Activated CD8-positive, alpha-beta T cell treated with anti-CD3 and anti-CD28 coated beads for 36 hours (primary cell): ENCODE measurements at regions of chr2 and their contacts with region 1.

Region 1: DNA sequence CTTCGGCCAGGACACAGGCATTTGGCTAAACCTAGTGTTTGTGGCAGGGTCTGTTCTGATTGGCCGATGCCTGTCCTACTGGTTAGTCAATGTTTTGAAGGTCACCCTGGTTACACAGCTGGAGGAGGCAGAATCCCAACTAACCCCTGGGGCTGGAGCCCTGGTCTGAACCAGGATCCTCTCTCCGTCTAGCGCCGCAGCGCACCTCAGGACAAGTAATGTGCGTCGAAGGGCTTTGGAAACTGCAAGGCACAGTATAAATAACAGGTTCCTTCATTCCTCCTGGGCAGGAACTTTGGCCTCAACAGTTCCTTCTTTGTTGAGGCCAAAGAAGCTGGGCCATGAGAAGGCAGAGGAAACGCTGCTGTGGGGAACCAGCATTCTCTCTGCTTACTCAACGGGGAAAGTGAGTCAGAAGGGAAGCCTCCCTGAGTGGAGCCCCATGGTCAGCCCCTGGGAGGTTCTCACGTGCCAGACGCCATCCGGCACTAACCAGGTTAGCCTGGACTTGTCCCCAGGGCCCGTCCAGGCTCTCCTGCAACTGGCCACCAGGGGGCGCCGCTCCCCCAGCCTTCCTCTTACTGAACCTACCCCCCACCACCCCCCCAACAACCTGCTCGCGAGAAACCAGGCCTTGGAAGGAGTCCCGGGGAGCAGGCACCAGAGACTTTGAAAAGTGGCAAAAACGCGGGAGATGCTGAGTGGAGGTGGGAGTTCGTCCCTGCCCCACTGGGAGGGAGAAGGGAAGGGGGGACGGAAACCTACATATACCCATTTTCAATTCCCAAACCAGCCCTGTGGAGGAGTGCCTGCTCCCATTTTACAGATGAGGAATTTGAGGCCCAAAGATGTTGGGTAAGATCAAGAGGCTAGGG is 19.8 kb downstream of the TEX44 start:
- DNase-seq: peak; percentile 99
- ATAC-seq: peak; percentile 55
- H3K4me3 Mint-ChIP-seq: peak overlapping the region; percentile 87
- H3K27ac Mint-ChIP-seq: peak overlapping the region; percentile 97
- H3K4me1 Mint-ChIP-seq: peaks cover 46% of the 10 kb centered on the region
- H3K27me3 Mint-ChIP-seq: no peaks in the 10 kb centered on the region
- CTCF ChIP-seq: peak; percentile 71

Region 2: GRCh38 chr2:231452799-231453508 is 159.5 kb before region 1 on chr2:
- CTCF ChIA-PET with region 1: interaction called, 3 read pairs
- POLR2A ChIA-PET with region 1: interaction called, 11 read pairs
- intact Hi-C with region 1: no loop called
- DNase-seq: peak; percentile 24
- ATAC-seq: peak; percentile 9
- H3K4me3 Mint-ChIP-seq: peak overlapping the region; percentile 8
- H3K27ac Mint-ChIP-seq: peak overlapping the region; percentile 57
- H3K4me1 Mint-ChIP-seq: peaks cover 24% of the 10 kb centered on the region
- H3K27me3 Mint-ChIP-seq: no peaks in the 10 kb centered on the region
- CTCF ChIP-seq: no peak

Region 3: DNA sequence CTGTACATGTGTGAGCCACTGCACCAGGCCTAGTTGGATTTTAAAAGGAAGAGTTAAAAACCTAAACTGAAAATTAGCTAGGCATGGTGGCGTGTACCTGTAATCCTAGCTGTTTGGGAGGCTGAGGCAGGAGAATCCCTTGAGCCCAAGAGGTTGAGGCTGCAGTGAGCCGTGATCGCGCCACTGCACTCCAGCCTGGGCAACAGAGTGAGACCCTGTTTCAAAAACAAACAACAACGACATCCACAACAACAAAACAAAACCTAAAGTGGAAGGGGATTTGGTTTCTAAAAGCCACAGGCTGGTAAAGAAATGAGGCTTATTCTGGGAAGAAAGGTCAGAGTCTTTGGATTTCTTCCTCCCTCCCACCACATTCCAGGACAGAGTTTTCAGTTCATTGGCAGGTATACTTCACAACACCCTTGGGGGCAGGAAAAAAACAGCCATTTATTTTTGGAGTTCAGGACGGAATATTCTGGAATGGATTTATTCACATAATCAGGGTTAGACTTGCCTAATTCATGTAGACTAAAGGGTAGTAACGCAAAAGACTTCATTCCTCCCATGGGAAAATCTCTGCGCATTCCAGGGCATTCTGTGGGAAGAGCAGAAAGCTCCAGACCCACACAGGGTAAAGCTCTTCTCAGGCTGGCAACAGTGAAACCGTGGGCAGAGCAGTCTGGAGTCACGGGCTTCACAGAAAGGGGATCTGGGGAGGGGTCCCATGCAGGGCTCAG is 15.1 kb after region 1 on chr2:
- CTCF ChIA-PET with region 1: interaction called, 12 read pairs
- POLR2A ChIA-PET with region 1: interaction called, 18 read pairs
- intact Hi-C with region 1: no loop called
- DNase-seq: no peak
- ATAC-seq: no peak
- H3K4me3 Mint-ChIP-seq: no peak overlapping the region
- H3K27ac Mint-ChIP-seq: peak overlapping the region; percentile 53
- H3K4me1 Mint-ChIP-seq: peaks cover 10% of the 10 kb centered on the region
- H3K27me3 Mint-ChIP-seq: no peaks in the 10 kb centered on the region
- CTCF ChIP-seq: no peak

Region 4: DNA sequence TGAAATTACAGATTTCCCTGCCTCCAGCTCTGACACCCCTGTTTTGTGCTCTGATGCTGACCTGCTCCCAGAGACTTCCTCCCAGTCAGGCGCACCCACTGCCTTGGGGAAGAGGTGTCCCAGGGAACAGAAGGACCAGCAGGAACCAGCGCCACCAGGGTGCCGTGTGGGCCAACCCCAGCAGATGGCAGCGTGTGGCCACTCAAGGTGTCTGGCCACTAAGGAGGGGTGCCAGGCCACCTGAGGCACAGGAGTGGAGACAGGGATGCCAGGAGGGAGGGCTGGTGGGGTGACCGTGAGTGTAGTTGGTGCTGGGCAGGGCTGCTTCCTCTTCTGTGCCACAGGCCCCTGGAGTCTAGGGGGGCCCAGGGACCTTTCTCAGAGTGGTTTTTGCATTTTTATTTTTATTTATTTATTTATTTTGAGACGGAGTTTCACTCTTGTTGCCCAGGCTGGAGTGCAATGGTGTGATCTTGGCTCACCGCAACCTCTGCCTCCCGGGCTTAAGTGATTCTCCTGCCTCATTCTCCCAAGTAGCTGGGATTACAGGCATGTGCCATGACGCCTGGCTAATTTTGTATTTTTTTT is 36.3 kb after region 1 on chr2:
- CTCF ChIA-PET with region 1: interaction called, 24 read pairs
- POLR2A ChIA-PET with region 1: interaction called, 10 read pairs
- intact Hi-C with region 1: no loop called
- DNase-seq: peak; percentile 81
- ATAC-seq: peak; percentile 99
- H3K4me3 Mint-ChIP-seq: no peak overlapping the region
- H3K27ac Mint-ChIP-seq: no peak overlapping the region
- H3K4me1 Mint-ChIP-seq: peaks cover 2% of the 10 kb centered on the region
- H3K27me3 Mint-ChIP-seq: no peaks in the 10 kb centered on the region
- CTCF ChIP-seq: peak; percentile 73

Region 5: GRCh38 chr2:231674587-231675338 is 62.3 kb after region 1 on chr2:
- CTCF ChIA-PET with region 1: interaction called, 236 read pairs
- POLR2A ChIA-PET with region 1: interaction called, 116 read pairs
- intact Hi-C with region 1: loop called (anchors 2 kb)
- DNase-seq: peak; percentile 77
- ATAC-seq: peak; percentile 85
- H3K4me3 Mint-ChIP-seq: peak overlapping the region; percentile 16
- H3K27ac Mint-ChIP-seq: no peak overlapping the region
- H3K4me1 Mint-ChIP-seq: peaks cover 12% of the 10 kb centered on the region
- H3K27me3 Mint-ChIP-seq: no peaks in the 10 kb centered on the region
- CTCF ChIP-seq: peak; percentile 92

Region 6: GRCh38 chr2:231706731-231707624 is 94.6 kb after region 1 on chr2:
- CTCF ChIA-PET with region 1: interaction called, 165 read pairs
- POLR2A ChIA-PET with region 1: interaction called, 166 read pairs
- intact Hi-C with region 1: no loop called
- DNase-seq: peak; percentile 98
- ATAC-seq: peak; percentile 62
- H3K4me3 Mint-ChIP-seq: peak overlapping the region; percentile 96
- H3K27ac Mint-ChIP-seq: peak overlapping the region; percentile 100
- H3K4me1 Mint-ChIP-seq: peaks cover 20% of the 10 kb centered on the region
- H3K27me3 Mint-ChIP-seq: peaks cover 2% of the 10 kb centered on the region
- CTCF ChIP-seq: peak; percentile 77

Region 7: DNA sequence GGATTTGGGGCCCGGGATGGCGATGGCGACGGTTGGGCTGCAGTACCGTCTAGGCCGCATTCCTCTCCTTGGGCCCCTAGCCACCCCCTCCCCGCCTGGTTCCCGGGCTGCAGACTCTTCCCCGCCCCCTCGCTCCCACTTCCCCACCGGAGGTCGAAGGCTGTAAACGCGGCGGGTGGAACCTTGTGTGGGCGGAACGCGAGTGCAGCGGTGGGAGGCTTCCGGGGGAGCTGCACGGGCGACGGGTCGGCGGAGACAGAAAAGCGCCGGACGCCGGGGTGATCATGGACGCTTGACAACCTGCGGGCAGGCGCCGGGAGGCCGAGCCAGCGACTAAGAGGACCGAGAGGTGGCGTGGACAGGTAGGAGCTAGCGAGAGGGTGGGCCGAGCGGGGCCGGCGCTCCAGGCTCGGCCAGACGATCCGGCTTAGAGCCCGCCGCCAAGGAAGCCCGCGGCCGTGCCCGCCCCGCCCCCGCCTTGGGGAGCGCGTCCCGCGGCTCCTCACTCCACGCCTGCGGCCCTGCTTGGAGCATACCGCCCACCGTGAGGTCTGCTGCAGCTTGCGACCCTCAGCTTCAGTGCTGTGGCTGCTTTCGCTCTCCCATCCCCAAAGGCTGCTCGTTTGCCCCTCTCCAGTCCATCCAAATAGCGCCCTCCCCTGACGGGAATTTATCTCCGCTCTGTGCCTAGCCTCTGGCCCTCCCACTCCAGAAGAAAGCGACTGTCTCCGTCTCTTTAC is 173.9 kb after region 1 on chr2 and contains the start of gene COPS7B:
- CTCF ChIA-PET with region 1: interaction called, 4 read pairs
- POLR2A ChIA-PET with region 1: interaction called, 13 read pairs
- intact Hi-C with region 1: loop called (anchors 5 kb)
- DNase-seq: peak; percentile 92
- ATAC-seq: peak; percentile 59
- H3K4me3 Mint-ChIP-seq: peak within 1 kb of the TSS; percentile 81
- H3K27ac Mint-ChIP-seq: peak within 1 kb of the TSS; percentile 90
- H3K4me1 Mint-ChIP-seq: peaks cover 56% of the 10 kb centered on the region
- H3K27me3 Mint-ChIP-seq: no peaks in the 10 kb centered on the region
- CTCF ChIP-seq: peak; percentile 52
- total RNA-seq, gene COPS7B: 51.3 to 53.6 TPM

Region 8: GRCh38 chr2:232406571-232407310 is 794.3 kb after region 1 on chr2 and contains the start of gene ALPG:
- CTCF ChIA-PET with region 1: no interaction called
- POLR2A ChIA-PET with region 1: no interaction called
- intact Hi-C with region 1: no loop called
- DNase-seq: no peak
- ATAC-seq: no peak
- H3K4me3 Mint-ChIP-seq: no peak within 1 kb of the TSS
- H3K27ac Mint-ChIP-seq: no peak within 1 kb of the TSS
- H3K4me1 Mint-ChIP-seq: no peaks in the 10 kb centered on the region
- H3K27me3 Mint-ChIP-seq: peaks cover 3% of the 10 kb centered on the region
- CTCF ChIP-seq: no peak
- total RNA-seq, gene ALPG: not detected